Gastrocnemius medialis (tissue), 4 donors: ENCODE measurements at regions of chr12 and their contacts with region 1.

Region 1: GRCh38 chr12:10033783-10034545 is 3.5 kb downstream of the CLEC9A start:
- DNase-seq: no peak
- ATAC-seq: no peak
- H3K4me3 ChIP-seq: no peak overlapping the region
- H3K27ac ChIP-seq: no peak overlapping the region
- H3K4me1 ChIP-seq: no peaks in the 10 kb centered on the region
- H3K27me3 ChIP-seq: no peaks in the 10 kb centered on the region
- CTCF ChIP-seq: peak in 3 of 5 experiments; percentile 20 to 31 (median 23)
- POLR2A ChIP-seq: no peak

Region 2: DNA sequence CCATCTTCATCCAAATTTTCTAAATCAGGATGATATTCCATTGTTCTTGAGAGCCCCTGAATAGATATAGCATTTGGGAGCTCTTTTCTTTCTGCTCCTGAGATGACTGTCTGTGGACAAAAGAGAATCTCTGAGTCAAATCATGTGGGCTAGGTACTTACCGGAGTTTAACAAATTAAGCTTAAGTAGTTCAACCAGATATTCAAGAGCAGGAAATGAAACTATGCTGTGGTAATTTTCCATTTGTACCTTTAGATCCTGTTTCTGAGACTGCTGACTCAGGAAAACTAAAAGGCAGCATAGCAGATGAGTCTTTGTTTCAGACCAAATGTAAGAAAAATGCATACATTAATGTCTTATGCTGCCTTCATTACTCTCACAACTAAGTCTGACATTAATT is 96.1 kb after region 1 on chr12 and contains the start of gene CLEC7A:
- in situ Hi-C with region 1: loop called in 3 of 4 experiments (anchors 5 to 25 kb)
- intact Hi-C with region 1: no loop called
- DNase-seq: no peak
- ATAC-seq: no peak
- H3K4me3 ChIP-seq: peak within 1 kb of the TSS in 1 of 4 donors; percentile 30
- H3K27ac ChIP-seq: peak within 1 kb of the TSS in 1 of 4 donors; percentile 8
- H3K4me1 ChIP-seq: no peaks in the 10 kb centered on the region
- H3K27me3 ChIP-seq: no peaks in the 10 kb centered on the region
- CTCF ChIP-seq: no peak
- POLR2A ChIP-seq: peak in 1 of 2 donors; percentile 15
- total RNA-seq, gene CLEC7A: 1.1 to 40.7 (median 3.6) TPM

Region 3: DNA sequence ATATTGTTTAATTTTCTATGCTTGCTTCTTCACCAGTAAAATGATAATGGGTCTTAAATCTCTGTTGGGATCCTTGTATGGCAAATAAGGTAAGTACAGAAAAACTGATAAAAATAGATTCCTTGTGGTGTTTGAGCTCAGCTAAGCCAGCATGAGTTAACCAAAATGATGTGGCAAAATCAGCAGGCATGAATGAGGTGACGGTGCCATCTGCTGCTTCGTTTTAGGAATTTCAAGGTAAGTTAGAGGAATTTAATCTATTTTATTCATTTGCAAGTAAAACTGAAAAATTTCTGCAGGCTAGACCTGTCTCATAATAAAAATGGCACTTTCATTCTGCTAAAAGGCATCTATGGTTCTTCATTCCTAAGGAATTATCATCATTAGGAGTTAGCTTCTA is 106.0 kb after region 1 on chr12:
- in situ Hi-C with region 1: loop called in 2 of 4 experiments (anchors 10 to 25 kb)
- intact Hi-C with region 1: loop called (anchors 5 kb)
- DNase-seq: no peak
- ATAC-seq: no peak
- H3K4me3 ChIP-seq: no peak overlapping the region
- H3K27ac ChIP-seq: no peak overlapping the region
- H3K4me1 ChIP-seq: peaks cover 0 to 3% of the 10 kb centered on the region in 2 donors
- H3K27me3 ChIP-seq: no peaks in the 10 kb centered on the region
- CTCF ChIP-seq: peak; percentile 26 to 49 (median 32)
- POLR2A ChIP-seq: no peak